CD14-positive monocyte (primary cell): ENCODE measurements at regions of chr2 and their contacts with region 1.

Region 1: DNA sequence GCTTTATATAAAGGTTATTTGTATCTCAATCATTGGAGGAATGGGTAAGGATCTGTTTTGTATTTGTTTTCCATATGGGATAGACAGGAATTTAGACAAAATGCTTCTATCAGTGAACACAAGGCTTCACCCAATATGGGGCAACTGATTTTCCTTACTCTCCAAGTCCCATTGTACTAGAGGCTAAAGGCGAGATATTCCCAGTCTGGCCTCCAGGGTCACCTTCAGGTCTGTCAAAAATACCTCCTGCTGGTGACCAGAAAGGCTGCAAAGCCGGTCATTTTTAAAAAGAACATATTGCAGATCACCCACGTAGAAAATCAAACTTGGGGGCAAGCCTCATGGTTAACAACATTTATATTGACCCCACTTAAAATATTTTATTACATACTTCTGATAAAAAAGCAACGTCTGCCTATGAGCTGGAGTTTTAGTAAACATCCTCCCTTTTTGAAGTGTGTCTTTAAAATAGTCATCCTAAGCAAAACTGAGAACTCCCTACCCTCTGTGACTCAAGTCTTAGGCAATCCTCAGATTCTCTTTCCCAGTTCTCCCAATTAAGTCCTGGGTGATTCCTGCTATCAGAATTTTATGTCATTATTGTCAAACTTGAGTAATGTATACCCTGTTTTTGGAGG is 276.6 kb downstream of the MREG start:
- DNase-seq: peak in 2 of 3 donors; percentile 44
- H3K4me3 ChIP-seq: no peak overlapping the region
- H3K4me3 Mint-ChIP-seq: no peak overlapping the region
- H3K27ac ChIP-seq: no peak overlapping the region
- H3K27ac Mint-ChIP-seq: peak overlapping the region in 6 of 7 donors; percentile 9 to 78 (median 39)
- H3K4me1 ChIP-seq: peaks cover 22 to 34% of the 10 kb centered on the region in 2 donors
- H3K4me1 Mint-ChIP-seq: peaks cover 28% of the 10 kb centered on the region
- H3K27me3 ChIP-seq: no peaks in the 10 kb centered on the region
- H3K27me3 Mint-ChIP-seq: peaks cover 0 to 3% (median 0%) of the 10 kb centered on the region in 3 donors
- CTCF ChIP-seq: peak; percentile 20

Region 2: DNA sequence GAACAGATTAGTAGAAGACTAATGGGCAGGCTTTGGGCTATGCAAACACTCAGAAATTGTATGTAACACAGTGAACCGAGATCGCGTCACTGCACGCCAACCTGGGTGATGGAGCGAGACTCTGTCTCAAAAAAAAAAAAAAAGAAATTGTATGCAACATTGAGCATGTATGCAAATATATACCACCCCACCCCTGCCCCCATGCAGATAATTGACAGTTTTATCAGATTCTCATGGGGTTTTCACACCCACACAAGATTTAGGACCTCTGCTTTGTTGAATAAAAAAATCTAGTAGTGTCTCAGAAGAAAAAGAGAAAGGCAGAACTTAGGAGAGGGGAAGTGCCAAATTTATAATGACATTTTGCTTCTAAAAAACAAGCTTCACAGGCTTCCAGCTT is 169.3 kb before region 1 on chr2:
- intact Hi-C with region 1: no loop called
- DNase-seq: no peak
- H3K4me3 ChIP-seq: no peak overlapping the region
- H3K4me3 Mint-ChIP-seq: no peak overlapping the region
- H3K27ac ChIP-seq: no peak overlapping the region
- H3K27ac Mint-ChIP-seq: no peak overlapping the region
- H3K4me1 ChIP-seq: no peaks in the 10 kb centered on the region
- H3K4me1 Mint-ChIP-seq: peaks cover 1% of the 10 kb centered on the region
- H3K27me3 ChIP-seq: peaks cover 0 to 5% of the 10 kb centered on the region in 2 donors
- H3K27me3 Mint-ChIP-seq: peaks cover 4 to 28% (median 7%) of the 10 kb centered on the region in 3 donors
- CTCF ChIP-seq: no peak

Region 3: GRCh38 chr2:215717501-215718381 is 19.0 kb before region 1 on chr2:
- intact Hi-C with region 1: no loop called
- DNase-seq: peak in 2 of 3 donors; percentile 22 to 42
- H3K4me3 ChIP-seq: no peak overlapping the region
- H3K4me3 Mint-ChIP-seq: no peak overlapping the region
- H3K27ac ChIP-seq: no peak overlapping the region
- H3K27ac Mint-ChIP-seq: peak overlapping the region in 1 of 7 donors; percentile 1
- H3K4me1 ChIP-seq: peaks cover 27% of the 10 kb centered on the region in 2 donors
- H3K4me1 Mint-ChIP-seq: peaks cover 39% of the 10 kb centered on the region
- H3K27me3 ChIP-seq: no peaks in the 10 kb centered on the region
- H3K27me3 Mint-ChIP-seq: peaks cover 0 to 8% (median 4%) of the 10 kb centered on the region in 3 donors
- CTCF ChIP-seq: no peak

Region 4: GRCh38 chr2:215784371-215784783 is 47.6 kb after region 1 on chr2:
- intact Hi-C with region 1: loop called in 1 of 2 experiments (anchors 10 kb)
- DNase-seq: no peak
- H3K4me3 ChIP-seq: no peak overlapping the region
- H3K4me3 Mint-ChIP-seq: no peak overlapping the region
- H3K27ac ChIP-seq: no peak overlapping the region
- H3K27ac Mint-ChIP-seq: no peak overlapping the region
- H3K4me1 ChIP-seq: peaks cover 0 to 7% of the 10 kb centered on the region in 2 donors
- H3K4me1 Mint-ChIP-seq: peaks cover 16% of the 10 kb centered on the region
- H3K27me3 ChIP-seq: peaks cover 0 to 10% of the 10 kb centered on the region in 2 donors
- H3K27me3 Mint-ChIP-seq: peaks cover 2 to 31% (median 4%) of the 10 kb centered on the region in 3 donors
- CTCF ChIP-seq: no peak